Breast epithelium (tissue), 4 donors: ENCODE measurements at regions of chr11 and their contacts with region 1.

Region 1: DNA sequence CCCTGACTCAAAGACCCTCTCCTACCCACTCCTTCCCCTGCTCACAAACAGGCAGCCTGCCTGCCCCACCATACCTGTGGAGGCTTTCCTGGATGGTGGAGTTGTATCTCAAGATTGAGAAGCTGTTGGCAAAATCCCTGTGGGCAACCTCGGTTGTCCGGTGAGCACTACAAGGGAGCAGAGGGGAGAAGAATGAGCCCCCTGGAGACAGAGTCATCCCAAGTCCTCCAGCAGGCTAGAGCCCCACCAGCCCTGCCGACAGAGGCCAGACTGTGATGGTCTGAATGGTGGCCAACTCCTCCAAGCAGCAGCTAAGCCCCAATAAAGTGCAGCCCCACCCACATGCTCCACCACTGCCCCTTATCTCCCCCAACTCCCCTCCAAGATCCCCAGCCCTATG is 17.5 kb downstream of the TMPRSS13 start:
- DNase-seq: peak in 1 of 2 donors; percentile 15
- H3K4me3 ChIP-seq: no peak overlapping the region
- H3K27ac ChIP-seq: no peak overlapping the region
- H3K4me1 ChIP-seq: no peaks in the 10 kb centered on the region
- H3K27me3 ChIP-seq: no peaks in the 10 kb centered on the region
- CTCF ChIP-seq: no peak
- POLR2A ChIP-seq: no peak

Region 2: GRCh38 chr11:117941163-117941707 is 29.5 kb after region 1 on chr11:
- intact Hi-C with region 1: loop called (anchors 1 kb)
- DNase-seq: no peak
- H3K4me3 ChIP-seq: no peak overlapping the region
- H3K27ac ChIP-seq: no peak overlapping the region
- H3K4me1 ChIP-seq: no peaks in the 10 kb centered on the region
- H3K27me3 ChIP-seq: no peaks in the 10 kb centered on the region
- CTCF ChIP-seq: no peak
- POLR2A ChIP-seq: no peak

Region 3: DNA sequence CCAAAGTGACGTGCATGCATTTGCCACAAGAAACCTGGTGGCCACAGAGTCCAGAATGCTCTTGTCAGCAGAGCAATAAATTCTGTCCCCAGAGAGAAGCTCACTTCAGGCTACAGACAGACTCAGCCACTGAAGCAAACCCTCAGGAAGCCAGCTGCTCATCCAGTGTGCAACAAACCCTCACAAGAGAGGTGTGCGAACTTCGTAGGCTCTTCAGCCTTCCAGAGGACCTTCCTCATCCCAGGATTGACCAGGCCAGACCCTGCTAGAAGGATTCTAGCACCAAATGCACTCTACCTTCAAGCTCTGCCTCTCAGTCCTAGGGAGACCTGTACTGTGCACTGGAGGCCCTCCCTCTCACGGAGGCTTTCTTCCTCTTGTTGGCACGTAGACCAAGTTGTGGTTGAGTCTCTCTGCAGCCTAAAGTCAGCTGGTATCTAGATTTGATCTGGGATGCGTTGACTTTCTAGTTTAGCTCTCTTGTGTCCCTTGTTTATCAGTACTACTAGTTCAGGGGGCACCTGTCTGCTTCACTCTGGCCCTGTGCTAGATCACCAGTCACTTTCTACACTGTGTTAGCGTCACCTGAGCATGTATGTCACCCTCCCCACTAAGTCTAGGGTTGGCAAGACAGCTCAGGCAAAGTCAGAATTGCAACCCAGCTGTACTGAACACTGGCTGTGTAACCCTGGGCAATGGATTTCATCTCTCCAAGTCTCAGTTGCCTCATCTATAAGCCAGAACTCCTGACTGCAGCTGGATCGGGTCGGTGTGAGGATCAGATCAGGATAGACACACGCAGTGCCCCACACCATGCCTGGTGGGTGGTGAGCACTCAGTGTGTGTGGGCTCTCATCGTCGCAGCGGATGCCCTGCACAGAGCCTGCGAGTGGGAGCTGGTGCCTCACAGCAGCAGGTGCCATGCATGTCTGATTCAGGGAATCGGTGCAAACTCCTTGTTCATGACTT is 39.6 kb after region 1 on chr11:
- intact Hi-C with region 1: no loop called
- DNase-seq: no peak
- H3K4me3 ChIP-seq: no peak overlapping the region
- H3K27ac ChIP-seq: no peak overlapping the region
- H3K4me1 ChIP-seq: no peaks in the 10 kb centered on the region
- H3K27me3 ChIP-seq: no peaks in the 10 kb centered on the region
- CTCF ChIP-seq: no peak
- POLR2A ChIP-seq: no peak